CD14-positive monocyte (primary cell): ENCODE measurements at regions of chrX and their contacts with region 1.

Region 1: DNA sequence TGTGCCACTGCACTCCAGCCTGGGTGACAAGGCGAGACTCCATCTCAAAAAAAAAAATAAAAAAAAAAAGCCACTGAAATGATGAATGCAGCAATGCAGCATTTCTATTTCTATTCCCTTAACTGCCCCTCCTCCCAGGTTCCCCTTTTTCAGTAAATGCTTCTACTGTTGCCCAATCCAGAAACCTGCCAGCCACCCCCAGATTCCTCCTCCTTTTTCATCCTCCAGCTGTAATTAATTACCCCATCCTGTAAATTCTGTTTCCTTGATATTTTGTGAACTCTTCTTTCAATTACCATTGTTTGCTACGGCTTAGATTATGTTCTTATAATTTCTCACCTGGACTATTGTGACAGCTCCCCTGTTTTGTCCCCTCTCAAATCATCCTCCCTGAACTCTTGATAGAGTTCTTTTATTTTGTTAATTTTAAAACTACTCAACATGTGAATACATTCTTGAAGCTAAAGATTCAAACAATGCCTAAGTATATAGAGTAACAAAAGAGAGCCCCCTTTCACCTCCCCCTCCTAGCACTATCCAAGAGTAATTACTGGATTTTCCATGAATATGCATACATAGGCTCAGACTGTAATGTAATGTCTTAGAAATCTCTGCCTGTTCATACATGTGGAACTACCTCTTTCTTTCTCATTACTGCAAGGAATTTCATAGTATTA is 140.6 kb upstream of the GPC4 start:
- DNase-seq: peak; percentile 72 to 82 (median 74)
- H3K4me3 ChIP-seq: no peak overlapping the region
- H3K4me3 Mint-ChIP-seq: peak overlapping the region in 1 of 2 donors; percentile 24
- H3K27ac ChIP-seq: peak overlapping the region; percentile 57 to 84
- H3K27ac Mint-ChIP-seq: peak overlapping the region; percentile 90 to 94 (median 92)
- H3K4me1 ChIP-seq: peaks cover 45 to 47% of the 10 kb centered on the region in 2 donors
- H3K4me1 Mint-ChIP-seq: peaks cover 23% of the 10 kb centered on the region
- H3K27me3 ChIP-seq: no peaks in the 10 kb centered on the region
- H3K27me3 Mint-ChIP-seq: peaks cover 0 to 3% (median 1%) of the 10 kb centered on the region in 3 donors
- CTCF ChIP-seq: no peak

Region 2: GRCh38 chrX:133482056-133482952 is 73.6 kb before region 1 on chrX:
- intact Hi-C with region 1: no loop called
- DNase-seq: no peak
- H3K4me3 ChIP-seq: no peak overlapping the region
- H3K4me3 Mint-ChIP-seq: no peak overlapping the region
- H3K27ac ChIP-seq: no peak overlapping the region
- H3K27ac Mint-ChIP-seq: no peak overlapping the region
- H3K4me1 ChIP-seq: no peaks in the 10 kb centered on the region
- H3K4me1 Mint-ChIP-seq: no peaks in the 10 kb centered on the region
- H3K27me3 ChIP-seq: no peaks in the 10 kb centered on the region
- H3K27me3 Mint-ChIP-seq: peaks cover 1 to 4% (median 2%) of the 10 kb centered on the region in 3 donors
- CTCF ChIP-seq: no peak

Region 3: GRCh38 chrX:133608406-133608805 is 52.5 kb after region 1 on chrX:
- intact Hi-C with region 1: loop called in 1 of 2 experiments (anchors 10 kb)
- DNase-seq: peak; percentile 30 to 36 (median 35)
- H3K4me3 ChIP-seq: no peak overlapping the region
- H3K4me3 Mint-ChIP-seq: no peak overlapping the region
- H3K27ac ChIP-seq: no peak overlapping the region
- H3K27ac Mint-ChIP-seq: peak overlapping the region in 5 of 7 donors; percentile 40 to 83 (median 62)
- H3K4me1 ChIP-seq: peaks cover 22 to 25% of the 10 kb centered on the region in 2 donors
- H3K4me1 Mint-ChIP-seq: peaks cover 22% of the 10 kb centered on the region
- H3K27me3 ChIP-seq: peaks cover 0 to 3% of the 10 kb centered on the region in 2 donors
- H3K27me3 Mint-ChIP-seq: peaks cover 0 to 6% (median 2%) of the 10 kb centered on the region in 3 donors
- CTCF ChIP-seq: no peak

Region 4: GRCh38 chrX:133645977-133646718 is 90.2 kb after region 1 on chrX:
- intact Hi-C with region 1: loop called in 1 of 2 experiments (anchors 2 kb)
- DNase-seq: peak; percentile 67 to 86 (median 74)
- H3K4me3 ChIP-seq: peak overlapping the region in 1 of 3 experiments; percentile 28
- H3K4me3 Mint-ChIP-seq: peak overlapping the region in 1 of 2 donors; percentile 51
- H3K27ac ChIP-seq: peak overlapping the region; percentile 38 to 85
- H3K27ac Mint-ChIP-seq: peak overlapping the region; percentile 85 to 97 (median 91)
- H3K4me1 ChIP-seq: peaks cover 32 to 33% of the 10 kb centered on the region in 2 donors
- H3K4me1 Mint-ChIP-seq: peaks cover 35% of the 10 kb centered on the region
- H3K27me3 ChIP-seq: no peaks in the 10 kb centered on the region
- H3K27me3 Mint-ChIP-seq: peaks cover 0 to 11% (median 0%) of the 10 kb centered on the region in 3 donors
- CTCF ChIP-seq: no peak